Activated T-helper 2 cell treated with anti-CD3 and anti-CD28 coated beads, Interferon-gamma antibody, Interleukin-2, Interleukin-4, amounts not matched to agents 10 μg/mL and 5 μg/mL and 100 μg/mL, durations not matched to agents 14 hours and 24 hours and 36 hours (primary cell): ENCODE measurements at regions of chr1 and their contacts with region 1.

Region 1: DNA sequence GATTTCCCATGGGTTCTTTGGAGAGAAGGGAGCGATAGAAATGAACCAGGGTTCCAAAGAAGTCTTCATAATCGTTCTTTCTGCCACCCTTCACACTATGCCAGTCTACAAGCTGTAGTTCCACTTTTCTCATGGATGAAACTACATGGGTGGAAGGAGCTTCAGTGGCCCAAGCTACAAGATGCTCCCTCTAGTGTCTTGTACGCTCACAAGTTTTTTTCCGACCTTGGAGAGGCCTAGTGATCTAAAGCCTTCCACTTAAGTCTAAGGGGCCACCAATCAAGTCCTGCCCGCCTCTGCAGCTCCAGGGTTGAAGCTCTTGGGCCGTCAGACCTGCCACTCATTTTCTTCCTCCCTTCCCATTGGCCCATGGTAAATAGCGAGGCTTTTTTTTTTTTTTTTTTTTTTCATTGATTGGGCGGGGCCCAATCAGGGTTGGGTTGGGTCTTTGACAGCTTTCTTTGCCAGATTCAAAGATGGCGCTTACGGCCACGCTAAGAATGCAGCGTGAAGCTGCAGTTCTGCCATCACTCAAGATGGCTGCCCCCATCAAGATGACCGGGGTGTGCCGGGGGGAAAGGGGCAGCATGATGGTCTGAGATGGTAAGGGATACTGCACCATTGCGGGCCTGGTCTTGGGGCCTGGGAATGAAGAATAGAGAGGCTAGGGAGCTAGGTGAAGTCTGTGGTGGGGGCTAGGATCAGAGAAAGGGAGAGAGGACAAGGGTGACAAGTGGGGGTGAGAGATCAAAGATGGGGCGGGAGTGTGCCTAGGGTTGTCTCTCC is at the start of gene TOMM40L:
- DNase-seq: peak; percentile 89
- H3K4me3 Mint-ChIP-seq: peak within 1 kb of the TSS; percentile 100
- H3K27ac Mint-ChIP-seq: peak within 1 kb of the TSS; percentile 100
- H3K4me1 Mint-ChIP-seq: peaks cover 23% of the 10 kb centered on the region
- H3K27me3 Mint-ChIP-seq: no peaks in the 10 kb centered on the region
- total RNA-seq, gene TOMM40L: 22.7 and 24.9 TPM in 2 replicates

Region 2: DNA sequence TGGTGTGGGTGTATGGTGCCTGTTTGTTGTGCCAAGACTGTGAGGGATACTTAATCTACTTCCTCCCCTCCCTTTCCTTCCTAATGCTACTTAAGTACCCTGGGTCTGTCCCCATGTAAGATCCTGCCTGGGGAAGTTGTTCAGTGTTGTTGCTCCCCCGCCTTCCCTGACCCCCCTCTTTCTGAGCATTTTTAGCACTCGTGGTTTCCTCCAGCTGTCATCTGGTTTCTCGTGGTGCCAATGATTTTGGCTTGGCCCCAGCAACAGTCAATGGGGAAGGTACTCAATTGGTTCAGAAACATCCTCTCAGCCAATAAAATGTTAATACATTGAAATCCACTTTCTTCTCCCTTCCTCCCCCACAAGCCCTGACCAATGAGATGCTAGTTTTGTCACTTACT is 40.4 kb before region 1 on chr1:
- intact Hi-C with region 1: loop called (anchors 1 kb)
- DNase-seq: peak; percentile 78
- H3K4me3 Mint-ChIP-seq: peak overlapping the region; percentile 67
- H3K27ac Mint-ChIP-seq: peak overlapping the region; percentile 98
- H3K4me1 Mint-ChIP-seq: peaks cover 55% of the 10 kb centered on the region
- H3K27me3 Mint-ChIP-seq: no peaks in the 10 kb centered on the region

Region 3: GRCh38 chr1:161209790-161210409 is 15.8 kb before region 1 on chr1:
- intact Hi-C with region 1: loop called (anchors 1 kb)
- DNase-seq: peak; percentile 62
- H3K4me3 Mint-ChIP-seq: no peak overlapping the region
- H3K27ac Mint-ChIP-seq: peak overlapping the region; percentile 73
- H3K4me1 Mint-ChIP-seq: peaks cover 21% of the 10 kb centered on the region
- H3K27me3 Mint-ChIP-seq: no peaks in the 10 kb centered on the region

Region 4: DNA sequence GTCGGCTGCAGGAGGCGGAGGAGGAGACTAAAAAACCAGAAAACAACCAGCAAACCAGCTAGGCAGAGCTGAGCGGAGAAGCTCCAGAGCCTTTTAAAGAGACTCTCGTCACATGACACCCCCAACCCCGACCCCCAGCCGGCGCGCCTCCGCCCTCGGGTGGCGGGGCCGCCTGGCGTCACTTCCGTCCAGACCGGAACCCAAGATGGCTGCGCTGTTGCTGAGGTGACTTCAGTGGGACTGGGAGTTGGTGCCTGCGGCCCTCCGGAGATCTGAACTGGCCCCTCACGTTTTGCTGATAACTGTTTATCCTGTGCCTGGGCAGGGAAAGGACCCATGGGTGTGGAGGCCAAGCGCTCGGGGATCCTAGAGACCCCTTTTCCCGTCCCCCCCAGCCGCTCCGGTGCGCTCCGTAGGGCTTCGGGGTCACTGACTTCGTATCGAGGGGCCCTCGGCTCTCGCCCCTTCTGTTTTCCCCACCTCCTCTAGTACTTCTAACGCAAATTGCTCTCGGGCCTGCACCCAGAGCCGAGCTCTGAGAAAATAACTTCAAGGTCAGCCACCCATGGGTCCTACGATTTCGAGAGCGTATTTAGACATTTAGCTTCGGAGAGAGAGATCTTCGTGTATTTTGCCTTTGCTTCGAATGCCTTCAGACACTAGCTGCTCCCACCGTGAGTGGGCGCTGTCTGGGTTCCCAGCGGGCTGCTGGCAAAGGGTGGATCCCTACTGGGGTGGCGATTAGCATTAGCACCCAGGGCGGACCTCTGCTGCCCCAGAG is 88.7 kb after region 1 on chr1 and contains the start of gene SDHC:
- intact Hi-C with region 1: loop called (anchors 2 kb)
- DNase-seq: peak; percentile 85
- H3K4me3 Mint-ChIP-seq: peak within 1 kb of the TSS; percentile 98
- H3K27ac Mint-ChIP-seq: peak within 1 kb of the TSS; percentile 93
- H3K4me1 Mint-ChIP-seq: peaks cover 25% of the 10 kb centered on the region
- H3K27me3 Mint-ChIP-seq: peaks cover 2% of the 10 kb centered on the region
- total RNA-seq, gene SDHC: 186 and 190 TPM in 2 replicates